ENCODE measurements at regions of chr12 and their contacts with region 1.

Region 1: DNA sequence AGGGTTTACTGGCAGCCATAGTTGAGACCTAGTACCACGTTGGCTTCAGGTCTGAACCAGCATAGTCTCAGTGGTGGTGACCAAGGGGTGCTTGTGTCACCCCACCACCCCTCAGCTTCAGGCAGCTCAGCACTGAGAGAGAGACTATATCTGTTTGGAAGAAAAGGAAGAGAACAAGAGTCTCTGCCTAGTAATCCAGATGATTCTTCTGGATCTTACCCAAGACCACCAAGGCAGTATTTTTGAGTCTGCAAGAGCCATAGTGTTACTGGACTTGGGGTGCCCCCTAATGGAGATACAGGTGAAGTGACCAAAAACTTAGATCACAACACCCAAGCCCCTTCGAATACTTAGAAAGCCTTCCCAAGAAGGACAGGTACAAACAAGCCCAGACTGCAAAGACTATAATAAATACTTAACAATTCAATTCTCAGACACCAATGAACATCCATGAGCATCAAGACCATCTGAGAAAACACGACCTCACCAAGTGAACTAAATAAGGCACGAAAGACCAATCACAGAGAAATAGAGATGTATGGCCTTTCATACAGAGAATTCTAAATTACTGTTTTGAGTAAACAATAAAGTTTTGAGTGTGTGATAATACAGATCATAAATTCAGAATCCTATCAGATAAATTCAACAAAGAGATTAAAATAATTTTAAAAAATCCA is 107.0 kb downstream of the HELB start:
- DNase-seq: peak; percentile 53
- H3K4me3 Mint-ChIP-seq: no peak overlapping the region
- H3K27ac Mint-ChIP-seq: no peak overlapping the region
- H3K4me1 Mint-ChIP-seq: peaks cover 6% of the 10 kb centered on the region
- H3K27me3 Mint-ChIP-seq: no peaks in the 10 kb centered on the region
- CTCF ChIP-seq: peak; percentile 75

Region 2: DNA sequence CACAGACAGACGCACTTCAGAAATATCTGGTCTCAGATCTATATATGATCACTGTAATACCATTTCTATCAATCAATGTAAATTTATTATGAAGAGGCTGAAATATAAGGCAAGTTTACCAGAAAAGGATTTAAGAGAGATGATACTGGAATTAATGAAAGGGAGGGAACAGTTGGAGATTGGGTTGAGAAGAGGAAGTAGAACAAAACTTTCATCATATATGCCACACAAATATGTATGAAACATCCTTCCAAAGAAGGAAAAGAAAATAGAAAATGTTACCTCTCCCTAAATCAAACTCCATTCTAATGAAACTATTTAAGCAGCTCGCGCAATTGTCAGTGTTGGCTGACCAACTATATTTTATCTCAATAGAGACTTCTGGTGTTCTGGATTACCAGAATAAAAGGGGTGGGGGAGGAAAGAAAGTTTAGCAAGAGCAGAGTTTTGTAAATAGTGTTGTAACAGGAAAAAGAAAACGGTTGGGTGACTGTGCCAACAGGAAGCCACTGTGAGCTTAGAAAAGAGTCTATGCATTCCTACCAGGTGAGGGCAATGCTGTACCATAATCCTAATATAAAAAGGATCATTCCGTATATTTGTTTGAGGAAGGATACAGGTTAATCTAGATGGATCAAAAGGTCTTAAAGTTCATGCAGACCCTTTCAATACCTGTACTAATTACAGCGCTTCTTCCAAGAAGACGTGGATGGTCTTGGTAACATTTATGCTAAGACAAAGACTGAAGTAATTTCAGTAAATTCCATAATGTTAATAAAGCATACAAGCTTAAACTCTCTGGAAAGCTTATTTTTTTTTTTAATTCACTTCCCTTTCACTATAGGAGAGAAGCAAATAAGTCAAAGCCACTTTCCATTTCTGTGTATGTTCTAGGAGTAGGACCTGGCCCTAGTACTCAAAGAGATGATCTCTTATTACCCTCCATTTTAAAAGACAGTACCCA is 264.3 kb before region 1 on chr12:
- CTCF ChIA-PET with region 1: interaction called, 9 read pairs
- POLR2A ChIA-PET with region 1: no interaction called
- intact Hi-C with region 1: loop called (anchors 2 kb)
- DNase-seq: peak; percentile 84
- H3K4me3 Mint-ChIP-seq: no peak overlapping the region
- H3K27ac Mint-ChIP-seq: peak overlapping the region; percentile 82
- H3K4me1 Mint-ChIP-seq: peaks cover 8% of the 10 kb centered on the region
- H3K27me3 Mint-ChIP-seq: no peaks in the 10 kb centered on the region
- CTCF ChIP-seq: peak; percentile 59

Region 3: GRCh38 chr12:66269757-66270383 is 139.5 kb before region 1 on chr12:
- CTCF ChIA-PET with region 1: interaction called, 24 read pairs
- POLR2A ChIA-PET with region 1: no interaction called
- intact Hi-C with region 1: loop called (anchors 1 kb)
- DNase-seq: peak; percentile 54
- H3K4me3 Mint-ChIP-seq: no peak overlapping the region
- H3K27ac Mint-ChIP-seq: no peak overlapping the region
- H3K4me1 Mint-ChIP-seq: no peaks in the 10 kb centered on the region
- H3K27me3 Mint-ChIP-seq: peaks cover 2% of the 10 kb centered on the region
- CTCF ChIP-seq: peak; percentile 50

Region 4: GRCh38 chr12:66279123-66279712 is 130.1 kb before region 1 on chr12:
- CTCF ChIA-PET with region 1: interaction called, 4 read pairs
- POLR2A ChIA-PET with region 1: no interaction called
- intact Hi-C with region 1: loop called (anchors 2 kb)
- DNase-seq: peak; percentile 41
- H3K4me3 Mint-ChIP-seq: no peak overlapping the region
- H3K27ac Mint-ChIP-seq: no peak overlapping the region
- H3K4me1 Mint-ChIP-seq: no peaks in the 10 kb centered on the region
- H3K27me3 Mint-ChIP-seq: peaks cover 36% of the 10 kb centered on the region
- CTCF ChIP-seq: peak; percentile 36

Region 5: DNA sequence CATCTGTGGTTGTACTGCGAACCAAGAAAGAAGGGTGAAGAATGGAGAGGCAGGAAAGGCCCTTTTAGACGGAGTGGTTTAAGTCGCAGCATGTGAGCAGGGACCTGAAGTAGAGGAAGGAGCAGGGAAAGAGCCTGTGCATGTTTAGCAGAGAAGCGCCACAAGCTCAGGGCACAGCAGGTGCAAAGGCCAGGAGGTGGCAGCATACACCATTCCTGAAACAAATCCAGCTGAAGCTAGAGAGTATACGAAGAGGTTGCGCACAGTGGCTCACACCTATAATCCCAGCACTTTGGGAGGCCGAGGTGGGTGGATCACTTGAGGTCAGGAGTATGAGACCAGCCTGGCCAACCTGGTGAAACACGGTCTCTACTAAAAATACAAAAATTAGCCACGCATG is 57.1 kb before region 1 on chr12:
- CTCF ChIA-PET with region 1: interaction called, 6 read pairs
- POLR2A ChIA-PET with region 1: no interaction called
- intact Hi-C with region 1: loop called (anchors 1 kb)
- DNase-seq: peak; percentile 41
- H3K4me3 Mint-ChIP-seq: no peak overlapping the region
- H3K27ac Mint-ChIP-seq: no peak overlapping the region
- H3K4me1 Mint-ChIP-seq: no peaks in the 10 kb centered on the region
- H3K27me3 Mint-ChIP-seq: no peaks in the 10 kb centered on the region
- CTCF ChIP-seq: peak; percentile 35